ENCODE measurements at regions of chr3 and their contacts with region 1.

Region 1: DNA sequence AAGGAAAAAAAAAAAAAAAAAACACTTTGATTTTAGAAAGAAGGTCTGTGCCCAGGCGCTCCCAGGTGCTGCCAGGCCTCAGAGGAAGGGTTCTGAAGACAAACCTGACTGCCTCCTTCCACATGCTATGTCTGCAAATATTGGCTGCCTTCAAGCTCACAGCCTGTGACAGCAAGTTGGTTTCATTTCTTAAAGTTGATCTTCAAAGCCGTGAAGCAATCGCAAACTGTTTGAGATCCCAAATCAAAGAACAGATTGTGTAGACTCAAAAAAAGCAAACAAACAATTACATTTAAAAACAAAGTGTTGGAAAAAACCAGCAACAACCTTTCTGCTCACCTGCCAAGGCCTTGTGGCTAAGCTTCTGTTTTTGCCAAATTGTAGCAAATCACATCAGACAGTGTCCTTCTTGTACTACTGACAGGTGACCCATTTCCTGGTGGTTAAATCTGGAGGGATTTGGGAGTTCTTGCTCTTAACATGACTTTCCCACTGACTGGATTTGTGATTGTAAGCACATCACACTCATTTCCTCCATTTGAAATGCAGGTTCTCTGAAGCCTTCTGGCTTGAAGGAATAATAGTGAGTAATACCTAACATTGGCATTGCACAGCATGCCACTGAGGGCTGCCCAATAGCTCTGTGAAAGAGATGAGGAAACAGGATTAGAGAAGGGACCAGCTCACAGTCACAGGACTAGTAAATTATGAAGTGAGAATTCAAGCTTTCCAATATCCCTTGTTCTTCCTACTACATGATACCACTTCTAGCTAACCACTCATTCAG is 502.4 kb downstream of the LPP start:
- DNase-seq: peak; percentile 73
- H3K4me3 ChIP-seq: no peak overlapping the region
- H3K27ac ChIP-seq: peak overlapping the region; percentile 44 to 53
- H3K4me1 ChIP-seq: no peaks in the 10 kb centered on the region
- H3K27me3 ChIP-seq: no peaks in the 10 kb centered on the region
- CTCF ChIP-seq: no peak
- POLR2A ChIP-seq: no peak

Region 2: GRCh38 chr3:189229196-189229828 is 572.9 kb after region 1 on chr3:
- intact Hi-C with region 1: loop called (anchors 10 kb)
- DNase-seq: no peak
- H3K4me3 ChIP-seq: no peak overlapping the region
- H3K27ac ChIP-seq: no peak overlapping the region
- H3K4me1 ChIP-seq: no peaks in the 10 kb centered on the region
- H3K27me3 ChIP-seq: no peaks in the 10 kb centered on the region
- CTCF ChIP-seq: no peak
- POLR2A ChIP-seq: no peak

Measured in prostate gland (tissue), 2 donors.